ENCODE measurements at regions of chr3 and their contacts with region 1.

Region 1: DNA sequence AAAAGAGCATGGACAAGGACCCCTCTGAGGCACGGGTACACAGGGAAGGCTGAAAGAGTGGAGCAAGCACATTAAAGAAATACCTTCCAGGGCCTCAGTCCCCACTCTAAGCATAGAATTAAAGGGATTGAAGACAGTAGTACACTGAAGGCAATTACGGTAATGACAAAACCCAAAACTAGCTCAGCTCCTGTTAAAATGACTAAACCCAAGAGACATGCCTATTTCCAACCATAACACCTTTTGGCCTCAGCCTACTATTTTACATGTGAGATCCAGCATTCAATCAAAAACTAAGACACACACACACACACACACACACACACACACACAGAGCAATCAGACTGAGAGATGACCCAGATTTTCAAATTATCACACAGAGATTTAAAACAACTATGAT is 19.8 kb downstream of the MAP4 start:
- DNase-seq: no peak
- H3K4me3 ChIP-seq: no peak overlapping the region
- H3K27ac ChIP-seq: no peak overlapping the region
- H3K4me1 ChIP-seq: no peaks in the 10 kb centered on the region
- H3K27me3 ChIP-seq: no peaks in the 10 kb centered on the region
- CTCF ChIP-seq: no peak

Region 2: GRCh38 chr3:48088749-48089466 is 92.5 kb after region 1 on chr3:
- CTCF ChIA-PET with region 1: no interaction called
- POLR2A ChIA-PET with region 1: interaction called, 13 read pairs
- intact Hi-C with region 1: no loop called
- DNase-seq: peak; percentile 95
- H3K4me3 ChIP-seq: peak overlapping the region; percentile 75
- H3K27ac ChIP-seq: peak overlapping the region; percentile 96
- H3K4me1 ChIP-seq: peaks cover 15% of the 10 kb centered on the region
- H3K27me3 ChIP-seq: no peaks in the 10 kb centered on the region
- CTCF ChIP-seq: no peak